ENCODE measurements at regions of chr14 and their contacts with region 1.

Region 1: GRCh38 chr14:63641473-63642228 is at the start of gene WDR89:
- DNase-seq: peak; percentile 97
- H3K4me3 Mint-ChIP-seq: peak within 1 kb of the TSS; percentile 88
- H3K27ac Mint-ChIP-seq: peak within 1 kb of the TSS; percentile 98
- H3K4me1 Mint-ChIP-seq: peaks cover 27% of the 10 kb centered on the region
- H3K27me3 Mint-ChIP-seq: no peaks in the 10 kb centered on the region
- total RNA-seq, gene WDR89: 26.8 and 27.4 TPM in 2 replicates

Region 2: DNA sequence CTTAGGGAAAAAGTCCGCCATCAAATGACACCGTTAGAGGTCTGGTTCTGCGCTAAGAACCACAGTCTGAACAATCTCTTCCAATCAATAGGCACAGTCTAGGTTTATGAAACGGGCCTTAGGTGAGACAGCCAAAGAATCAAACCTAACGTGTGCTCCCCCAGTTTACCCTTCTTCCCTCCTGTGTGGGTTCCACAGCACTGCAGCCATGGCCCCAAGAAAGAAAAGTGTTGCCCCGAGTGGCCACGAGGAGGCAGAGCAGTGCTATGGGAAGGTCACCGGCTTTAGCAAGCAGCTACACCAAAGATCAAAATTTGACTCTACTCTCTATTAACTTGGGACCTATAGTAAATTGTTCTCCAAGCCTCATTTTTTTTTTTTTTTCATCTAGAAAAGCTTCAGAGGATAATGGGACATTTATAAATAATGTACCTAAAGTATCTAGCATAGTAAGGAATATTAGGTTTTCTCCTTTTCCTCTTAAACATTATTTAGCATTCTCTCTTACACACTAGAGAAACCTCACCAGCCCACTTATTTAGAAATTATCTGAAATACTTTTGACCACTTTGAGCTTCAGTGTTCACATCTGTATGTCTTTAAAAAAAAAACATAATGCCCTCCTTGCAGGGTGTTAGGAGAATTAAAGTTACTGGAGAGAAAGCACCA is 252.8 kb before region 1 on chr14:
- intact Hi-C with region 1: loop called (anchors 2 kb)
- DNase-seq: peak; percentile 35
- H3K4me3 Mint-ChIP-seq: no peak overlapping the region
- H3K27ac Mint-ChIP-seq: no peak overlapping the region
- H3K4me1 Mint-ChIP-seq: peaks cover 8% of the 10 kb centered on the region
- H3K27me3 Mint-ChIP-seq: no peaks in the 10 kb centered on the region

Region 3: DNA sequence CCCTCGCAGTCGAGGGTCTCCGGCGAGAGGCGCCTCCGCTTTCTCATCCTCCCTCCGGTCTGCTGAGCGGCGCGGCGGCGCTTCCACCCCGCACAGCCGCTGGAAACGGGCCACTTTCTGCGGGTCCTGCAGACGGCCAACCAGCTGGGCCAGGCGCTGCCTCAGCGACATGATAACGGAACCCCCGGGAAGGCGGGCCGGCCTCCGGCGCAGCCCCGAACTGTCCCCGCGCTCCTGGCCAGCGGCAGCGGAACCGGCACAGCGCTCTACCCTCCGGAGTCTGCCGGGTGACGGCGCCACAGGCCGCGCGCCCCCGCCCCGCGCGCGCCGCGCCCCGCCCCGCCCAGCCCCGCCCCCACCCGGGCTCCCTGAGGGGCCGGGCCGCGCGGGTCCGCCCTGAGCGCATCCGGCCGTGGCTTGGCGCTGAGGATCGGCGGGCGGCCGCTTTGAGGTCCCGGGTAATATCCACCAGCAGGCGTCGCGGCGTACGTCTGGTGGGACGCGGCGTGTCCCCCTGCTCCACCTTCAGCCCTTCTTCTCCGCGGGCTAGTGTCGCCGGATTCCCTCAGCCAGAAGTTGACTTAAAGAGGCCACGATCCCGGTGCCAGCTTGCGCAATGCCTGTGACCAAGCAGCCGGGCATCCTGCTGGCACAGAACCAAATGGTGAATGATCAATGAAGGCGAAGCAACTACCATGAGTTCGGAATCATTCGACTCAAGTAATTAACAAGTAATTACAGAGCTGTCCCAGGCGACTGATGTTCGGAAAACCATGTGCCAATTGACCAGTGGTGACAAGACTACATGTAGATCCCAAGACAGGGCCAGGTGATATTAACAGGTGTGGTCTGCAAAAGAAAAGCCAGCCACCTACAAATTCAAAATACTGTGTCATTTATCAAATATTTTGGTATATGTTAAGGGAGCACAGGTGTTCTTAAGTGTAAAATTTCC is 86.4 kb after region 1 on chr14 and contains the start of gene SGPP1:
- intact Hi-C with region 1: loop called (anchors 1 kb)
- DNase-seq: peak; percentile 81
- H3K4me3 Mint-ChIP-seq: peak within 1 kb of the TSS; percentile 99
- H3K27ac Mint-ChIP-seq: peak within 1 kb of the TSS; percentile 99
- H3K4me1 Mint-ChIP-seq: peaks cover 33% of the 10 kb centered on the region
- H3K27me3 Mint-ChIP-seq: peaks cover 16% of the 10 kb centered on the region
- total RNA-seq, gene SGPP1: 14.7 and 14.8 TPM in 2 replicates

Region 4: DNA sequence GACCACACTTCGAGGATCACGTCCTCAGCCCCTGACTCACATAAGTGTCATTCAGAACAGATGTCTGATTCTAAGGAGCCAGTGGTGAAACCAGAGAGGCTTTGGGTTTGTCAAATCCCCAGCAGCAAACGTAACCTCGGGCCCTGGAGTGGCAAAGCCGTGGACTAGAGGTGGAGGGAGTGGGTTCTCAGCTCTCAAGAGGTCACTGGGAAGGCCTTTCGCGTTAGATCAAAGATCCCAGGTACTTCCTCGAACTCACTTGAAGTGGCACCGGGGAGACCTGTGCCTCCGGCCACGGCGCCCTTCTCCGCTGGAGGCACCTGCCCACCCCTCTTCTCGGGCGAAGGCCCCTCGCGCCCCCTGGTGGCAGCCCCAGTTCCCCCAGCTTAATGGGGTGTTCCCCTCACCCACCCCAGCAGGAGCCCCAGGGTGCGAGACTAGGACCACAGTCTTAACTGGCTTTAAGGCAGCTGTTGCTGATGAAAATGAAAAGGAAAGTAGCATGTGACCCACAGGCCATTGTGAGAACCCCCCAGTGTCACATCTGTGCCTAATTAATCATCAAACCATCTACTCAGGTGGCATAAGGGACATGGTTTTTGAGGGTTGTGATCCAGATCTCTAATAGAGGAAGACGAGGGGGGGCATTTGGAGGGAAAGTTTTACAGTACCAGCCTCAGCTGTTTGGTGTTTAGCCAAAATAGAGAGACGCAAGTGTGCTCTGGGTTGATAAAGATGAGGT is 653.2 kb after region 1 on chr14:
- intact Hi-C with region 1: loop called (anchors 5 kb)
- DNase-seq: peak; percentile 73
- H3K4me3 Mint-ChIP-seq: peak overlapping the region; percentile 73
- H3K27ac Mint-ChIP-seq: no peak overlapping the region
- H3K4me1 Mint-ChIP-seq: peaks cover 35% of the 10 kb centered on the region
- H3K27me3 Mint-ChIP-seq: peaks cover 26% of the 10 kb centered on the region

Region 5: DNA sequence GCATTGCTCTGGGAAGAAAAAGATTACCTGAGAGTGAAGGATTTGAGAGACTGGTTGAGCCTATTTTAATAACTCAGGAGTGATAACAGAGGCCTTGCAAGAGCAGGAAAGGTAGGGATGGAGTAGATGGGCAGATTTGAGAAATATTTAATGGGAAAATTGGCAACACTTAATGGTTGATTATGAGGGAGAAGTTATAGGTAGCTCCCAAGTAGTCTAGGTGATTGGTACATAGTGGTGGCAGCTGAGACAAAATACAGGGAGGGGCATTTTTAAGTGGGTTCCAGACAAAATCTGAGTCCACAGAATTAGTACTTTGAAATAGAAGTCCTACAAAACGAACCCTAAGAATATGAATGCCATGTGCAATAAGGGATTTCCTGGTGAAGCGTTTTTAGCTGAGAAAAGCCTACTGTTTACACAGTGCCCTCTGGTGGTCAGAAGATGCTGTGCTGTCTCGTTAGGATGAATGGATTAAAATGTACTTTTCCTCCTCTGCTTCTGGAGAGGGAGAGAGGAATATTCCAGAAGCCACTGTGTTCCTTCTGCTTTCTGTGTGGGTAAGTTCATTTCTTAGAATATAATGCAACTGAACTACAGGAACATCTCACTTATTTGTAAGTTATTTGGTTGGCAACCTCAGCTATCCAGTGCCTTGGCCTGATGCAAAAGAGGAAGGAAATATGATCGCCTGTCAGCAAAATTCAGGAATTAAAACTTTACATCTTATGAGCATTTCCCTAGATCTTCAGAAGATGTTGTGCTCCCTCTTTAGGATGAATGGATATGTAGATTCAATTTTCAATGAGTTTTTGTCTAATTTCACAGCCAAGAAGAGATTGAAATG is 869.4 kb after region 1 on chr14:
- intact Hi-C with region 1: loop called (anchors 1 kb)
- DNase-seq: peak; percentile 58
- H3K4me3 Mint-ChIP-seq: peak overlapping the region; percentile 63
- H3K27ac Mint-ChIP-seq: peak overlapping the region; percentile 69
- H3K4me1 Mint-ChIP-seq: peaks cover 74% of the 10 kb centered on the region
- H3K27me3 Mint-ChIP-seq: no peaks in the 10 kb centered on the region